ENCODE measurements at regions of chr10 and their contacts with region 1.

Region 1: DNA sequence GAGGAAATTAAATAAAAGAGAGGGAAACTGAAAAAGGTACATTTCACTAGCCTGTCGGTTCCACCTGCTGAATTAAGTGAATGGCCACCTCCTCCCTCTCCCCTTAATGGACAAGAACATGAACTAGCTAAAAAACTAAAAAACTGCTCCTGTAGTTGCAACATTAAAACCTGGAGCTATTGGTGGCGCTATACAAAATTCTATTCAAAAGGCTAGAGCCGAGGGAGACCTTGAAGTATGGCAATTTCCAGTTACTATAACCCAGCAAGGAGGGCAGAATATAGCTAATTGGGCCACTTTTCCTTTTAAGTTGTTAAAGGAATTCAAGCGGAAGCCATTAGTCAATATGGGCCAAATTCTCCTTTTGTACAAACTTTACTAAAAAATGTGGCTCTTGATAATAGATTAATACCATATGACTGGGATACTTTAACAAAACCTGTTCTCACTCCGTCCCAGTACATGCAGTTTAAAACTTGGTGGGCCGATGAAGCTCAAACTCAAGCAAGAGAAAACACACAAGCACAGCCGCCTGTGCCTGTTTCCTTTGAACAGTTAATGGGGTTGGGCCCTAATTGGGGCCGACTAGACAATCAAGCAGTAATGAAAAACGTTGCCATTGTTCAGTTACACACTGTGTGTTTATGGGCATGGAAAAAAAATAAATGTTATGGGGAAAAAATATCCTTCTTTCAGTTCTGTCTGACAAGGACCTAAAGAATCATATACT is 6.5 kb upstream of the CHST3 start:
- DNase-seq: peak in 1 of 2 experiments; percentile 47
- ATAC-seq: peak in 1 of 2 experiments; percentile 52; a peak in 3 of 6 replicates
- H3K4me3 ChIP-seq: no peak overlapping the region
- H3K27ac ChIP-seq: peak overlapping the region; percentile 72 to 84; a peak in 5 of 6 replicates
- H3K4me1 ChIP-seq: peaks cover 23% of the 10 kb centered on the region
- CTCF ChIP-seq: peak; percentile 23; the same call in 2 of the 3 replicates
- EP300 ChIP-seq: no peak
- POLR2A ChIP-seq: no peak
- RAD21 ChIP-seq: no peak

Region 2: GRCh38 chr10:71569775-71570588 is 387.7 kb before region 1 on chr10:
- CTCF ChIA-PET with region 1: no interaction called
- POLR2A ChIA-PET with region 1: no interaction called
- DNase-seq: peak; percentile 56 to 76
- ATAC-seq: peak; percentile 66 to 85; a peak in 4 of 6 replicates
- H3K4me3 ChIP-seq: no peak overlapping the region
- H3K27ac ChIP-seq: no peak overlapping the region
- H3K4me1 ChIP-seq: no peaks in the 10 kb centered on the region
- CTCF ChIP-seq: peak; percentile 86
- EP300 ChIP-seq: no peak
- POLR2A ChIP-seq: no peak
- RAD21 ChIP-seq: peak; percentile 78 to 81

Region 3: DNA sequence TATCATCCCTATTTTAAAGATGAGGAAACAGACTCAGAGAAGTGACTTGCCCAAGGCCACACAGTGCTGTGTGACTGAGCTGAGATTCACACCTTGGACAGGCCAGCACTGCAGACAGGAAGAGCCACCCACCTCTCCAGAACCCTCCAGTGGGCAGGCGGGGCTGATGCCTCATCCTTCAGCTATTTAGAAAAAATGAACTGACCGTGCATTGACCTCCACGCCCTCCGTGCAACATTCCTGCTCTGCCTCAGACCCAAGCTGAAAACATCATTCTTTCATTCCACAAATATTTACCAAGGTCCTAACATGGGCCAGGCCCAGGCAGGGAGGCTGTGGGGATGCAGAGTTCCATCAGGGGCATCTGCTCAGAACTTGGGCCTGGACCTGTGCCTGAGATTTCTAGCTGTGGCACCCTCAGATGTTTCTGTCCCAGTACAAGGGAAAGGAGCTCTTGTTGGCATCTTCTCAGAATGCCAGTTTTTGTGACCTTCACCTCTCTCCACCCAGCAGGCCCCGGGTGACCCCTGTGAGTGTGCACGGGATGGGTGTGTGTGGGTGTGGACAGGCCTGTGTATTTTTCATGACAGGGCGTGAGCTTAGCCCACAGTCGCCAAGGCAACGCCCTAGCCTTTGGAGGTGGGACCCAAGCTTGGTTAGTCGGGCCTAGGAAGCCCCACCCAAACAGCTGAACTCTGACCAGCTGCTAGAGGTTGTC is 190.8 kb before region 1 on chr10:
- CTCF ChIA-PET with region 1: no interaction called
- POLR2A ChIA-PET with region 1: no interaction called
- DNase-seq: peak; percentile 85 to 98
- ATAC-seq: peak; percentile 81 to 88
- H3K4me3 ChIP-seq: no peak overlapping the region
- H3K27ac ChIP-seq: peak overlapping the region; percentile 98 to 99
- H3K4me1 ChIP-seq: peaks cover 89% of the 10 kb centered on the region
- CTCF ChIP-seq: no peak
- EP300 ChIP-seq: peak; percentile 75 to 87; a peak in 3 of 5 replicates
- POLR2A ChIP-seq: no peak
- RAD21 ChIP-seq: peak; percentile 0 to 16; a peak in 2 of 5 replicates

Region 4: GRCh38 chr10:71868192-71868697 is 89.5 kb before region 1 on chr10:
- CTCF ChIA-PET with region 1: no interaction called
- POLR2A ChIA-PET with region 1: no interaction called
- DNase-seq: peak; percentile 57 to 80
- ATAC-seq: peak; percentile 57 to 88
- H3K4me3 ChIP-seq: no peak overlapping the region
- H3K27ac ChIP-seq: peak overlapping the region; percentile 91 to 93
- H3K4me1 ChIP-seq: peaks cover 67% of the 10 kb centered on the region
- CTCF ChIP-seq: no peak
- EP300 ChIP-seq: peak; percentile 65 to 77; a peak in 3 of 5 replicates
- POLR2A ChIP-seq: no peak
- RAD21 ChIP-seq: no peak; a peak in 1 of 5 replicates

Region 5: DNA sequence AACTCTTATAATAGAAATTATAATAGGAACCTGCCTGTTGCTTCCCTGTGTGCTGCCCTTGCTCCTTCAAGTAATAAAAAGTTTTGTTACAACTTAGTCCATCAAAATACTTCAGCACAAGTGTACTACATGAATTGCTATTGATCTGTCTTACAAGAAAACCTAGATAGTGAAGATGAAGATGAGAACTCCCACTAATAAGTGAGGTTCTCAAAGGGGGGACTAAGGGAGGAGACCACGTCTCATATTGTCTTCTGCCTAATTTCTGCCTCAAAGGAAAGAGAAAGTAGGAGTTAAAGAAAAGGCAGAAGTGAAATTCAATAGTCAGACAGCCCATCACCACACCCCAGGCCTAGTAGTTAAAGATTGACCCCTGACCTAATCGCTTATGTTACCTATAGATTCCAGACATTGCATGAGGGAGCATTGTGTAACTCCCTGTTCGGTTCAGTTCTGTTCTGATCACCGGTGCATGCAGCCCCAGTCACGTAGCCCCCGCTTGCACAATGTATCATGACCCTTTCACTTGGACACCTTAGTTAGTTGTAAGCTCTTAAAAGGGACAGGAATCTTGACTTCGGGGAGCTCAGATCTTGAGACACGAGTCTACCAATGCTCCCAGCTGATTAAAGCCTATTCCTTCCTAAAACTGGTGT is 11.8 kb before region 1 on chr10:
- CTCF ChIA-PET with region 1: interaction called, 27 read pairs
- POLR2A ChIA-PET with region 1: no interaction called
- DNase-seq: no peak
- ATAC-seq: no peak
- H3K4me3 ChIP-seq: no peak overlapping the region
- H3K27ac ChIP-seq: no peak overlapping the region
- H3K4me1 ChIP-seq: no peaks in the 10 kb centered on the region
- CTCF ChIP-seq: no peak
- EP300 ChIP-seq: no peak
- POLR2A ChIP-seq: no peak
- RAD21 ChIP-seq: no peak

Region 6: GRCh38 chr10:71974489-71975021 is 16.8 kb after region 1 on chr10:
- CTCF ChIA-PET with region 1: interaction called, 101 read pairs
- POLR2A ChIA-PET with region 1: no interaction called
- DNase-seq: peak; percentile 80 to 84
- ATAC-seq: peak; percentile 65 to 69
- H3K4me3 ChIP-seq: no peak overlapping the region
- H3K27ac ChIP-seq: peak overlapping the region; percentile 87 to 98
- H3K4me1 ChIP-seq: peaks cover 100% of the 10 kb centered on the region
- CTCF ChIP-seq: no peak
- EP300 ChIP-seq: peak in 1 of 2 experiments; percentile 39; a peak in 1 of 5 replicates
- POLR2A ChIP-seq: no peak
- RAD21 ChIP-seq: no peak

Region 7: DNA sequence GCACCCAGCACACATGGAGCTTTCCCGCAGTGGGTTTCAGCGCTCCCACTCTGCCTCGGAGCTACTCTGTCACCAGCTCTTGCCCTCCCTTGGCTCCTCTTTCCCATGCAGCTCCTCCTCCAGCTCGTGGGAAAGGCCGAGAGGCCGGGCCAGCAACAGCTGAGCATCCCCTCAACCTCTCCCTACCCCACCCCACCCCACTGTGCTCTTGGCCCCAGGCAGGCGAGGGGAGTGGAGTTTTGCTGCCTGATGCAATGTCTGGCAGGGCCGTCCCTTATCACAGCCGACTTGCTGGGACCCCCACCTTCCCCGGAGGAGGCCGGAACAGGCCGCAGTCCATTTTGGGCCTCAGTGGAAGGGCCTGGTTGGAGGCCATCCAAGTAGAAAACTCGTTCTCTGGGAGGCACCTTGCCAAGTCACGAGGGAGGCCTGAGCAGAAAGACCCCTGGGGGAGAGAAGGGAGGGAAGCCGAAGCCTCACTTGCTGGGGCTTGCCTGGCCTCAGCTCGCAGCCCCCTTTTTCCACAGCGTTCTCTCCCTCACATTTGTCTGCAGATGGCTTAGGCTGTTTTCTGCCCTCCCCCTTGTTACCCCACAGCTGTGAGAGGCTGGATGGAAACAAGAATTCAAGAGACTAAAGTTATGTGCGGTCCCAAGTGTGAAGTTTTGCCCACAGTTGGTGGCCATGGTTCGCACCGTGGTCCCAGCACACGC is 41.8 kb after region 1 on chr10:
- CTCF ChIA-PET with region 1: interaction called, 23 read pairs
- POLR2A ChIA-PET with region 1: no interaction called
- DNase-seq: no peak
- ATAC-seq: peak; percentile 5 to 27; a peak in 3 of 6 replicates
- H3K4me3 ChIP-seq: no peak overlapping the region
- H3K27ac ChIP-seq: peak overlapping the region; percentile 32 to 82; a peak in 5 of 6 replicates
- H3K4me1 ChIP-seq: peaks cover 37% of the 10 kb centered on the region
- CTCF ChIP-seq: no peak
- EP300 ChIP-seq: no peak
- POLR2A ChIP-seq: no peak
- RAD21 ChIP-seq: no peak

Measured in A549 (cell line).